ENCODE measurements at regions of chr22 and their contacts with region 1.

Region 1: DNA sequence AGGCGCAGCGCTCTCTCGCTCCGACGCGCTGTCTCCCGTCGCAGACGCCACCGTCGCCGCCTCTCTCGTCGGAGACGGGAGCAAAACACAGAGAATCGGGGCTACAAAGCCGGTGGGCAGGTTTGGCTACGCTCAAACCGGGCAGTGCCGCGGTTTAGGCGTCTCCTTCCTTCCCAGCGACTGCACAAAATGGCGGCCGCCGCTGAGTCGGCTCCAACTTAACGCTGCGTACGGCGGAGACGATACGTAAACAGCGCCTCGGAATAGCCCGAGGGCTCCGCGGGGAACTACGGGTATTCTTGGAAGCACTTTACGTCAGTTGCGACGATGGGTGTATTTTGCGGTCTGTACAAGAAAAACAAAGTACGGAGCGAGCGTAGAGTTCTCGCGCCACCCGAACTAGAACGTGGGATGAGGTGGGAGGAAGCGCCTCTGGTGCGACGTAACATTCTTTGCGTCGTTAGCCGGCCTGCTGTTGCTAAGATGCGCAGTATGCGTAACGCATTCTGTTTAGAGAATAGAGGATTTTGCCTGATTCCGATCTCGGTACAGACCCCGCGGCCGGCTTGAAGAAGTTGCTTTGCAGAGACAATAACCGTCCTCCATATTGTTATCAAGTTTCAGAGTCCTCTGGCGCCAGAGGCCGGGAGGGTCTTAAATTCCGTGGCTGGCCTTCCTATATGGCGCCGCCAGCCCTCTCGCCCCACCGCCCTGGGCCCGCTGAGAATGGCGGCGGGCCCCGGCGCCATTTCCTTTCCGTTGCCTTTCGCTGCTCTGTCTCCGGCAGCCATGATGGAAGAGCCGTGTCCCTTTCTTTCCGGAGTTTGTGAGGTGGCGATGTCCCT is at the start of gene DDX17:
- DNase-seq: peak; percentile 88
- ATAC-seq: peak; percentile 91
- H3K4me3 ChIP-seq: peak within 1 kb of the TSS; percentile 85
- H3K27ac ChIP-seq: peak within 1 kb of the TSS; percentile 90
- H3K4me1 ChIP-seq: peaks cover 24% of the 10 kb centered on the region
- H3K27me3 ChIP-seq: no peaks in the 10 kb centered on the region
- CTCF ChIP-seq: no peak
- total RNA-seq, gene DDX17: 333 and 512 TPM in 2 replicates

Region 2: GRCh38 chr22:38398609-38399461 is 107.5 kb before region 1 on chr22:
- CTCF ChIA-PET with region 1: no interaction called
- POLR2A ChIA-PET with region 1: interaction called, 11 read pairs
- intact Hi-C with region 1: no loop called
- DNase-seq: peak; percentile 65
- ATAC-seq: peak; percentile 65
- H3K4me3 ChIP-seq: peak overlapping the region; percentile 82
- H3K27ac ChIP-seq: no peak overlapping the region
- H3K4me1 ChIP-seq: peaks cover 12% of the 10 kb centered on the region; the same call in 1 of the 2 replicates
- H3K27me3 ChIP-seq: no peaks in the 10 kb centered on the region
- CTCF ChIP-seq: no peak

Region 3: GRCh38 chr22:38549495-38549894 is 43.2 kb after region 1 on chr22:
- CTCF ChIA-PET with region 1: no interaction called
- POLR2A ChIA-PET with region 1: no interaction called
- intact Hi-C with region 1: no loop called
- DNase-seq: no peak
- ATAC-seq: no peak
- H3K4me3 ChIP-seq: no peak overlapping the region
- H3K27ac ChIP-seq: no peak overlapping the region
- H3K4me1 ChIP-seq: peaks cover 15% of the 10 kb centered on the region
- H3K27me3 ChIP-seq: no peaks in the 10 kb centered on the region
- CTCF ChIP-seq: no peak

Region 4: GRCh38 chr22:38569972-38570778 is 63.8 kb after region 1 on chr22 and contains the start of gene DMC1:
- CTCF ChIA-PET with region 1: no interaction called
- POLR2A ChIA-PET with region 1: no interaction called
- intact Hi-C with region 1: loop called (anchors 5 kb)
- DNase-seq: peak; percentile 77
- ATAC-seq: peak; percentile 65
- H3K4me3 ChIP-seq: peak within 1 kb of the TSS; percentile 80
- H3K27ac ChIP-seq: no peak within 1 kb of the TSS
- H3K4me1 ChIP-seq: peaks cover 9% of the 10 kb centered on the region
- H3K27me3 ChIP-seq: no peaks in the 10 kb centered on the region
- CTCF ChIP-seq: no peak
- total RNA-seq, gene DMC1: not detected in 2 replicates

Measured in PC-3 (cell line).